ENCODE measurements at regions of chr5 and their contacts with region 1.

Region 1: GRCh38 chr5:16456103-16456832 is 9.3 kb downstream of the ZNF622 start:
- DNase-seq: peak in 2 of 5 donors; percentile 35 to 57
- ATAC-seq: peak in 3 of 4 donors; percentile 62 to 76 (median 63)
- H3K4me3 ChIP-seq: no peak overlapping the region
- H3K27ac ChIP-seq: peak overlapping the region in 10 of 12 donors; percentile 6 to 95 (median 50)
- H3K4me1 ChIP-seq: peaks cover 2 to 73% (median 52%) of the 10 kb centered on the region in 12 donors
- H3K27me3 ChIP-seq: no peaks in the 10 kb centered on the region
- CTCF ChIP-seq: peak; percentile 59 to 79 (median 70)
- POLR2A ChIP-seq: no peak

Region 2: GRCh38 chr5:16005225-16005624 is 451.0 kb before region 1 on chr5:
- intact Hi-C with region 1: loop called in 1 of 10 experiments (anchors 10 kb)
- DNase-seq: no peak
- ATAC-seq: no peak
- H3K4me3 ChIP-seq: no peak overlapping the region
- H3K27ac ChIP-seq: no peak overlapping the region
- H3K4me1 ChIP-seq: peaks cover 0 to 11% (median 0%) of the 10 kb centered on the region in 12 donors
- H3K27me3 ChIP-seq: no peaks in the 10 kb centered on the region
- CTCF ChIP-seq: no peak
- POLR2A ChIP-seq: no peak

Region 3: DNA sequence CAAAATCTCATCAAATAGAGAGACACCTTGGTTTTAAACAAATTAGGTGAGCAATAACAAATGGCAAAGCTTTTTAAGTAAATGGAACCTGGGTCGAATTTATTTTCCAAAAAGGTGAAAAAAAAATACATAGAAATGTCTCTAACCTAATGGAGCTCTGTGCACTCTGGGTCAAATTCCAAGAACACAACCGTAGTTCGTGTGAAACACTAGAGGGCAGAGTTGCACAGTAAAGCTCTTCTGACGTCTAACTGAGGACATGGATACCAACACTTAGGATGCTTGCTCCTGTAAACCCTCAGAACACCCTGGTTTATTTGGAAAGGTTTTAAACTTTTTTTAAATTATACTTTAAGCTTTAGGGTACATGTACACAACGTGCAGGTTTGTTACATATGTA is 295.6 kb before region 1 on chr5:
- intact Hi-C with region 1: loop called in 9 of 10 experiments (anchors 2 to 10 kb)
- DNase-seq: no peak
- ATAC-seq: peak in 3 of 4 donors; percentile 75 to 86 (median 78)
- H3K4me3 ChIP-seq: no peak overlapping the region
- H3K27ac ChIP-seq: no peak overlapping the region
- H3K4me1 ChIP-seq: peaks cover 0 to 4% (median 0%) of the 10 kb centered on the region in 12 donors
- H3K27me3 ChIP-seq: no peaks in the 10 kb centered on the region
- CTCF ChIP-seq: peak; percentile 42 to 72 (median 58)
- POLR2A ChIP-seq: no peak

Region 4: DNA sequence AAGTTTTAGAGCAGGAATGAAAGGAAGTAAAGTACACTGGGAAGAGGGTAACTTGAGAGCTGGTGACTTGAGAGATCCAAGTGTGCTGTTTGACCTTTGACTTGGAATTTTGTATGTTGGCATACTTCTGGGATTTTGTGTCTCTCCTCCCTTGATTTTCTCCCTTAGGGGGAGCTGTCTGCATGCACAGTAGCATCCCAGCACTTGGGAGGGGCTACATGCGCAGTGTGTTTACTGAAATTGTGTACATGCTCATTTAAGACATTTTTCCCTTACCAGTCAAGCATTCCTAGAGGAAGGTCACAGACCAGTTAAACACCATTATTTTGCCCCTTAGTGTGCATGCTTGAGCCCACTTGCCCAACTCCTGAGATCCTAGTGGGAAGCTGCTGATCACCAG is 110.8 kb before region 1 on chr5:
- intact Hi-C with region 1: loop called in 2 of 10 experiments (anchors 5 to 10 kb)
- DNase-seq: no peak
- ATAC-seq: no peak
- H3K4me3 ChIP-seq: no peak overlapping the region
- H3K27ac ChIP-seq: no peak overlapping the region
- H3K4me1 ChIP-seq: no peaks in the 10 kb centered on the region
- H3K27me3 ChIP-seq: no peaks in the 10 kb centered on the region
- CTCF ChIP-seq: peak in 3 of 12 donors; percentile 10 to 31 (median 18)
- POLR2A ChIP-seq: no peak

Region 5: GRCh38 chr5:16666883-16667398 is 210.7 kb after region 1 on chr5:
- intact Hi-C with region 1: loop called in 1 of 10 experiments (anchors 5 kb)
- DNase-seq: peak; percentile 56 to 79 (median 70)
- ATAC-seq: peak; percentile 52 to 86 (median 83)
- H3K4me3 ChIP-seq: peak overlapping the region in 1 of 12 donors; percentile 14
- H3K27ac ChIP-seq: peak overlapping the region in 10 of 12 donors; percentile 15 to 56 (median 43)
- H3K4me1 ChIP-seq: peaks cover 0 to 44% (median 28%) of the 10 kb centered on the region in 12 donors
- H3K27me3 ChIP-seq: no peaks in the 10 kb centered on the region
- CTCF ChIP-seq: peak; percentile 14 to 60 (median 48)
- POLR2A ChIP-seq: no peak

Measured in heart left ventricle (tissue), 16 donors.